Activated CD4-positive, alpha-beta T cell treated with anti-CD3 and anti-CD28 coated beads, Interleukin-2, amount 10 ng/mL, durations not matched to agents 24 days and 14 days (primary cell): ENCODE measurements at regions of chr22 and their contacts with region 1.

Region 1: DNA sequence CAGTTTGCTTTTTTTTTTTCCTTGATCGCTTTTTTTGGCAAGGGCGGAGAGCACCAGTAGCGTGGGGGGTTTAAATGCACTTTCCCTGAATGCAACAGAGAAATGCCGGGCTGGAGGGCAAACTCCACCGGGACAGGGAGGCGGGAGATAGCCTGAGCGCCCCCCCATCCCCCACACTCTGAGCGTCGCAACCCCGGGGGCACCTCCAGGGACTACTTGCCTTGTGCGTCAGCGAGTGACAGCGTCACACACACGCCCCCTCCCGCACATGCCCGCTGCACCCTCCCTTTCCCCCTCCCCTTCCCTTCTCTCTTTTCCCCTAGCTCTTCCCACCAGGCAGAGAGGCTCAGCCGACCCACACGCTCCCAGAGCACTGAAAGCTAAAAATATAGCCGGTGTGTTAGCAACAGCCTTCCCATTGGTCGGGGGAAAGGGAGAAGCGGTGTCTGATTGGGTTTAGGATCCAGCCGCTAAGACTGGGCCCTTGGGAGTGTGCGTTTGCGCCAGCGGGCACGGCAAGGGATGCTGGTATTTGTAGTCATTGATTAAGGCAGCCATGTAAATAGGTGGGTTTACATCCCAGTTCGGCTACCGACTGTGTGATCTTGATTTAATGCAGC is 1.7 kb upstream of the TOB2 start:
- DNase-seq: peak; percentile 97
- H3K4me3 Mint-ChIP-seq: peak overlapping the region; percentile 96
- H3K27ac Mint-ChIP-seq: peak overlapping the region; percentile 95
- H3K4me1 Mint-ChIP-seq: peaks cover 21% of the 10 kb centered on the region
- H3K27me3 Mint-ChIP-seq: no peaks in the 10 kb centered on the region

Region 2: DNA sequence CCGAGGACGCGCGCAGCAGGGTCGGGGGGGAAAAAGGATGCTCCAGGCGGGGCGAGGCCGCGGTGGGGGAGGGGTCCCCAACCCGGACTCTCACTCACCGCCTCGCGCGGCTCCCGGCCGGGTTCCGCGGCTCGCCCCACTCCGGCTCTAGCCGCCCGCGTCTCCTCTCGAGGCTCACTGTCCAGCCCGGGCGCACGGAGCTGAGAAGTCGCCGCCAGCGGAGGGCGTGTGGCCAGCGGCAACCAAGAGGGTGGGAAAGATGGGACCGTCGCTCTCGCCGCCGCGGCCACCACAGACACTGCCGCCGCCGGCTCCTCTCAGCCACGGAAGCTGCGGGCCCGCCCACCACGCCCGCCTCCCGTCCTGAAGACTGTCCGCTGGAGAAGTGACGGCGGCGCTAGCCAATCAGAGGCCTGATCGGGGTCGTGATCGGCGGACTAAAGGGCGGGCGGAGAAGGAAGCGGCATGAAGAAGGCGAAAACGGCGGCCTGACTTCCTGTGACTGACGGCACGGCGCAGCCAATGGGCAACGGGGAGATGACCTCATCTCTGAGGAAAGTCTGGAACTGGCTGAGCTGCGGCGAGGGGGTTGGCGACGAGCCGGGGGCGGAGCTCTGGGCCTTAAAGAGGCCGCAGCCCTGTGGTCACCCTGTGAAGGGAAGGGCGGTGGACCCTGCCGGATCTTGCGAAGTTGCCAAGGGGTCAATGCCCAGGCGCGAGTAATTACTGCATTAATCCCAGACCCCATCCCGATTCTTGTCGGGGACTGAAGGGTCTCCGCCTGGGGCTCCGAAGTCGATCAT is 811.7 kb before region 1 on chr22 and contains the start of gene MRTFA:
- intact Hi-C with region 1: loop called (anchors 5 kb)
- DNase-seq: peak; percentile 100
- H3K4me3 Mint-ChIP-seq: peak within 1 kb of the TSS; percentile 91
- H3K27ac Mint-ChIP-seq: peak within 1 kb of the TSS; percentile 95
- H3K4me1 Mint-ChIP-seq: peaks cover 32% of the 10 kb centered on the region
- H3K27me3 Mint-ChIP-seq: no peaks in the 10 kb centered on the region
- total RNA-seq, gene MRTFA: 51.7 and 51.9 TPM in 2 replicates

Region 3: DNA sequence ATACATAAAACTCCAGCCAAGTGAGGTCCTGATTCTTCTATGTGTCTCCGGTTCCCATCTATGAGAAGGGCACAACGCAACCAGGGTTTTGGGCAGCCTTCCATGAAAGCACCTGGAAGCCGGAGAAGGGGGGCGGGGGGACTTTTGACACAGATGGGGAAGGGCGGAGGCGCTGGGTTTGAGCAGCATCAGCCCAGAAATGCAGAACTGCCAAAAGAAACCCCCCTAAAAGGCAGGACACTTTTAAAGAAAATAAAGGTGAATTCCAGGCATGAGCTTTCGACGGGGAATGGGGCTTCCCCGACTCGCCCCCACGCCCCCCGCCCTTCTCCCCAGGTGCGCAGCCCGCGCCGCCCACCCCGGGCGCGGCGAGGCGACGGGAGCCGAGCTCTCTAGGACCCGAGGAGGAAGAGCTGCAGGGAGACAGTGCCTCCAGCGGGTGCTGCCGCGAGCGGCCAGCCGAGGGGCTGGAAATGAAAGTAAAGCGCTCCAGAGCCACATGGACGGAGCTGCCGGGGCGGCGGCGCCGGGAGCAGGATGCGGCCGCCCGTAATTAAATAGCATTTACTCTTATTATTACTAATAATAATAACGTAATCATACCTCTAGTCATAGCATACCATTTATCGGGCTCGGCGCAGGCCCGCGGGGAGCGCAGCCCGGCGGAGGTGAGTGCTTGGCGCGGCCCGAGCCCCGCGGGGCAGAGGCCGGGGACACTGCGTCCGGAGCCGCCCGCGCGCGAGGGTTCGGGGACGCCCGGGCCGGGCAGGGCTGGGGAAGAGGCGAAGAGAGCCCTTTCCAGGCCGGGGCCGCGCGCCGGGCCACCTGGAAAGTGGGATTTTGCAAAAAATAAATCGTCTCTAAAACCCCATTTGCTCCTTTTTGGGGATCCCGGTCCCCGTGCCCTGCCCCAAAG is 146.9 kb before region 1 on chr22 and contains the start of gene ZC3H7B:
- intact Hi-C with region 1: loop called (anchors 5 kb)
- DNase-seq: peak; percentile 95
- H3K4me3 Mint-ChIP-seq: peak within 1 kb of the TSS; percentile 82
- H3K27ac Mint-ChIP-seq: peak within 1 kb of the TSS; percentile 86
- H3K4me1 Mint-ChIP-seq: peaks cover 26% of the 10 kb centered on the region
- H3K27me3 Mint-ChIP-seq: no peaks in the 10 kb centered on the region
- total RNA-seq, gene ZC3H7B: 69.1 and 70.5 TPM in 2 replicates

Region 4: DNA sequence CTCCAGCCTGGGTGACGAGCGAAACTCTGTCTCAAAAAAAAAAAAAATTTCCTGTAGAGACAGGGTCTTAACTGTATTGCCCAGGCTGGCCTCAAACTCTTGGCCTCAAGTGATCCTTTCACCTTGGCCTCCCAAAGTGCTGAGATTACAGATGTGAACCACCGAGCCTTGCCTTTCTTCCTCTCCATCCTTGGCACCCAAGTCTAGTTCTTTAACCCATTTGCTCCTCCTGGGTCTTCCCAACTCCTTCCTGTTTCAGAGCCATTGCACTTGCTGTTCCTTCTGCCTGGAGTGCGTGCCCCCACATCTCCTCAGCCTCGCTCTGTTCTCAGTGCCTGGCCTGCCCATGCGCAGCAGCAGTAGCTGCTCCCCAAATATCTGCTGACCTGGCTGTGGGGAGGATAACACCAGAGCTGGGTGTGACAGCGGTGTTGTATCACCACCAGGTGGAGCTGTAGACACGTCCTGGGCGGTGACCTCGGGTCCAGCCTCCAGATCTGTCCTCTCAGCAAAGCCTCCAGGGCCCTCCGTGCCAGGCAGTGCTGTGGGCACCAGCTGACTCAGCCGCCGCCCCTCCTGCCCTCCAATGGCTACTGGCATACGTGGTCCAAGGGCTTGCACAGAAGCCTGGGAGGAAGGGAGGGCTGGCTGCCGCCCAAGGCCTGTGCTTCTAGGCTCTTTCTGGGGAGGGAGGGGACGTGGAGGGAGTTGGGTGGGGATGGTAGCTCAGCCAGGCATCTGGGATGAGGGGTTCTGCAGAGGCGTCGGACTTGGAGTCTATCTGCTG is 44.6 kb before region 1 on chr22:
- intact Hi-C with region 1: loop called (anchors 2 kb)
- DNase-seq: peak; percentile 96
- H3K4me3 Mint-ChIP-seq: no peak overlapping the region
- H3K27ac Mint-ChIP-seq: peak overlapping the region; percentile 23
- H3K4me1 Mint-ChIP-seq: peaks cover 11% of the 10 kb centered on the region
- H3K27me3 Mint-ChIP-seq: no peaks in the 10 kb centered on the region

Region 5: DNA sequence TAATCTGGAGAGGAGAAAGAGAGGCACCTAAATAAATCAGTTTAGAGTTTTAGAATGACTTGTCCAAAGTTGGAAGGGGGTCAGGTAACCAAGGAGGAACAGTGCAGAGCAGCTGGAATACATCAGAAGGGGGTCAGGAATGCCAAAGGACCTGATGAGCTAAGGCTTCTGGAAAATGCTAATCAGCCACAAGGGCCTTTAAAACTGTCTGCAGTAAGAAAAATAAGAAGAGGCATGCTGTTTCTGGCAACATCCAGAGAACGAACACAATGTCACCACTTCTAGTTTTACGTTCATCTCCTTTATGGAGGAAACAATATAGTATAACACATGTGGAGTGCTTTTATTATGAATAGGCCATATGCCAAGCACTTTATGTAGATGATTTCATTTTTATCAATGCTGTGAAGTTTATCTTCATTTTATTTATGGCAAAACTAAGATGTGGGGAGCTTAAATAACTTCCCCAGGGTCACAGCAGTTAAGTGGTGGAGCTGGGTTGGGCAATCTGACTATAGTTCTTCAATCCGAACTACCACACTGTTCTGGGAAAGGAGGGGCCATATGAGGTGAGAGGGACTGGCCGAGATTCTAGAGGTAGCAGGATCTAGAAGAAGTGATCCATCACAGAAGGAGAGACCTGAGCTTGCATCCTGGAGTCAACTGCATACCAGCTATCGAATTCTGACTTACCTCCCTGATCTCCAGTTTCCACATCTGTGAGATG is 43.2 kb after region 1 on chr22:
- intact Hi-C with region 1: no loop called
- DNase-seq: no peak
- H3K4me3 Mint-ChIP-seq: no peak overlapping the region
- H3K27ac Mint-ChIP-seq: no peak overlapping the region
- H3K4me1 Mint-ChIP-seq: no peaks in the 10 kb centered on the region
- H3K27me3 Mint-ChIP-seq: no peaks in the 10 kb centered on the region

Region 6: DNA sequence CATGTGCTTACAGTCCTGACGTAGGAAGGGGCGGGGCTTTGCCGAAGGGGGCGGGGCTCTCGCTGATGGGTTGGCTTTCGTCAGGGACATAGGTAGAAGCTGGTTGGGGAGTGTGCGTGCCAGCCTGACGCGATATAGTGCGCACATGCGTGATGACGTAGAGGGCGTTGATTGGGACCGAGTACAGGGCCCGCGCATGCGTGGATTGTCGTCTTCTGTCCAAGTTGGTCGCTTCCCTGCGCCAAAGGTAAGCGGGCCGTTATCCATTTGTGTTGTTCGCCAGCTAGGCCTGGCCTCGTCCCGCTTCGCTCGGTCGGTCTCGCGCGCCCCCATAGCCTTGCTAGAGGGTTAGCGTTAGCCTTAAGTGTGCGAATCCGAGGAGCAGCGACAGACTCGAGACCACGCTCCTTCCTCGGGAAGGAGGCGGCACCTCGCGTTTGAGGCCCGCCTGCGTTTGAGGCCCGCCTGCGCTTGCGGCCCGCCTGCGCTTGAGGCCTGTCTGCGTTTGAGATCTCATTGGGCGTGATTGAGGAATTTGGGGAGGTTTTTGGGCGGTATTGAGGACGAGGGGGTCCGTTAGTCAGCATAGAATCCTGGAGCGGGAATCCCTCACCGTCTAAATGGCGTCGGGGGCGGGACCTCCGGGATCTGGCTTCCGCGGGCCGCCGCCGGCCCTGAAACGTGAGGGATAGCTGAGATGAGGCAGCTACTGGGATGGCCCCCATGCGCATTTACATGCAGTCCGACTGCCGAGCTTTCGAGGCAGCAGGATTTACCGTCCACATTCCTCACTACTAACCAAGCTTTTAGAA is 173.0 kb after region 1 on chr22 and contains the start of gene XRCC6:
- intact Hi-C with region 1: loop called (anchors 1 kb)
- DNase-seq: peak; percentile 99
- H3K4me3 Mint-ChIP-seq: peak within 1 kb of the TSS; percentile 99
- H3K27ac Mint-ChIP-seq: peak within 1 kb of the TSS; percentile 99
- H3K4me1 Mint-ChIP-seq: peaks cover 34% of the 10 kb centered on the region
- H3K27me3 Mint-ChIP-seq: no peaks in the 10 kb centered on the region
- total RNA-seq, gene XRCC6: 400 and 414 TPM in 2 replicates